Endothelial cell of umbilical vein (primary cell): ENCODE measurements at regions of chr16 and their contacts with region 1.

Region 1: GRCh38 chr16:66357153-66357928 is 9.2 kb upstream of the CDH5 start:
- DNase-seq: peak; percentile 93
- H3K4me3 ChIP-seq: no peak overlapping the region
- H3K27ac ChIP-seq: peak overlapping the region; percentile 99
- H3K4me1 ChIP-seq: peaks cover 51% of the 10 kb centered on the region
- H3K27me3 ChIP-seq: no peaks in the 10 kb centered on the region
- CTCF ChIP-seq: peak; percentile 74 to 84
- POLR2A ChIP-seq: no peak

Region 2: GRCh38 chr16:66159987-66160386 is 197.4 kb before region 1 on chr16:
- CTCF ChIA-PET with region 1: no interaction called
- POLR2A ChIA-PET with region 1: no interaction called
- dilution Hi-C with region 1: no loop called
- intact Hi-C with region 1: no loop called
- DNase-seq: no peak
- H3K4me3 ChIP-seq: no peak overlapping the region
- H3K27ac ChIP-seq: no peak overlapping the region
- H3K4me1 ChIP-seq: no peaks in the 10 kb centered on the region
- H3K27me3 ChIP-seq: no peaks in the 10 kb centered on the region
- CTCF ChIP-seq: no peak
- POLR2A ChIP-seq: no peak

Region 3: GRCh38 chr16:66344533-66345145 is 12.7 kb before region 1 on chr16:
- CTCF ChIA-PET with region 1: interaction called, 65 read pairs
- POLR2A ChIA-PET with region 1: no interaction called
- dilution Hi-C with region 1: no loop called
- intact Hi-C with region 1: no loop called
- DNase-seq: peak; percentile 52
- H3K4me3 ChIP-seq: no peak overlapping the region
- H3K27ac ChIP-seq: no peak overlapping the region
- H3K4me1 ChIP-seq: no peaks in the 10 kb centered on the region
- H3K27me3 ChIP-seq: peaks cover 0 to 2% of the 10 kb centered on the region in 2 experiments
- CTCF ChIP-seq: peak; percentile 59 to 65
- POLR2A ChIP-seq: no peak

Region 4: GRCh38 chr16:66376559-66377305 is 19.4 kb after region 1 on chr16:
- CTCF ChIA-PET with region 1: interaction called, 126 read pairs
- POLR2A ChIA-PET with region 1: interaction called, 53 read pairs
- dilution Hi-C with region 1: no loop called
- intact Hi-C with region 1: loop called (anchors 1 kb)
- DNase-seq: peak; percentile 83
- H3K4me3 ChIP-seq: no peak overlapping the region
- H3K27ac ChIP-seq: peak overlapping the region; percentile 96
- H3K4me1 ChIP-seq: peaks cover 87% of the 10 kb centered on the region
- H3K27me3 ChIP-seq: no peaks in the 10 kb centered on the region
- CTCF ChIP-seq: no peak
- POLR2A ChIP-seq: peak; percentile 39

Region 5: DNA sequence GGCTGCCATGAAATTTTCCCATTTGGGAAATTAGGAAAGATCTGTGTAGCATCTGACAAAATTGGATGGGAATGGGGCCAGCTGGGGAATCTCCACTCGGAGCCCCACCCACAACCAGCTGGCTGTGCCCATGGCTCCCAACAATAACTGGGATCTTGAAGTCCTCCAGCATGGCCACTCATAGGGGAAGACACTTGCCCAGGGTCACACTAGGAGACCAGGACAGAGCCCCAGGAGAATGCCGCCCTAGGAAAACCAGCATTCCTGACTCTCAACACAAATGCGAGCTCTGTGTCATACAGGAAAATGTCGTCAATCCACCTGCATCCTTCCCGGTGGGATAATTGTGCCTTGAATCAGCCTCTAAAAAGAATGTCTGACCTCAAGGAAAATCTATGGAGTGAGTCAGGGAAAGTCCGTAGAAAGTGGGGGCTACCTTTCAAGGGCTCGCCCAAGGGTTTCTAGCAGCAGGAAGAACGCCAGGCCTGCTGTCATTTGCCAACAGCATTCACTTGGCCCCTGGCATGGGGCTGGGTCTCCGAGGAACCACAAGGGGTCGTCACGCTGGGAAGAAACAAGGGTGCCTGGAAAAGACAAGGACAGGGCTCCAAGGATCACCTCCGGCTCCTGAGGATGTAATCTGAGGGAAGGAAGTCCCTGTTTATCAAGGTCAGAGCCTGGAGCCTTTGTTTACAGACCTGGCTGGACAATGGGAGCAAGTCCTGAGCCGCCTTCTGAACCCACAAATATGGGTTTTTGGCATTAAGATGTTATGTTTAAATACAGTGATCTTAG is 25.0 kb after region 1 on chr16:
- CTCF ChIA-PET with region 1: interaction called, 28 read pairs
- POLR2A ChIA-PET with region 1: interaction called, 5 read pairs
- dilution Hi-C with region 1: no loop called
- intact Hi-C with region 1: loop called (anchors 1 kb)
- DNase-seq: peak; percentile 98
- H3K4me3 ChIP-seq: peak overlapping the region in 1 of 3 experiments; percentile 29
- H3K27ac ChIP-seq: peak overlapping the region; percentile 100
- H3K4me1 ChIP-seq: peaks cover 59% of the 10 kb centered on the region
- H3K27me3 ChIP-seq: no peaks in the 10 kb centered on the region
- CTCF ChIP-seq: peak; percentile 35 to 43
- POLR2A ChIP-seq: peak; percentile 27

Region 6: GRCh38 chr16:66511615-66512500 is 154.5 kb after region 1 on chr16:
- CTCF ChIA-PET with region 1: interaction called, 3 read pairs
- POLR2A ChIA-PET with region 1: no interaction called
- dilution Hi-C with region 1: no loop called
- intact Hi-C with region 1: loop called (anchors 1 kb)
- DNase-seq: peak; percentile 70
- H3K4me3 ChIP-seq: no peak overlapping the region
- H3K27ac ChIP-seq: peak overlapping the region; percentile 86
- H3K4me1 ChIP-seq: peaks cover 58% of the 10 kb centered on the region
- H3K27me3 ChIP-seq: no peaks in the 10 kb centered on the region
- CTCF ChIP-seq: no peak
- POLR2A ChIP-seq: no peak